ENCODE measurements at regions of chr1 and their contacts with region 1.

Region 1: DNA sequence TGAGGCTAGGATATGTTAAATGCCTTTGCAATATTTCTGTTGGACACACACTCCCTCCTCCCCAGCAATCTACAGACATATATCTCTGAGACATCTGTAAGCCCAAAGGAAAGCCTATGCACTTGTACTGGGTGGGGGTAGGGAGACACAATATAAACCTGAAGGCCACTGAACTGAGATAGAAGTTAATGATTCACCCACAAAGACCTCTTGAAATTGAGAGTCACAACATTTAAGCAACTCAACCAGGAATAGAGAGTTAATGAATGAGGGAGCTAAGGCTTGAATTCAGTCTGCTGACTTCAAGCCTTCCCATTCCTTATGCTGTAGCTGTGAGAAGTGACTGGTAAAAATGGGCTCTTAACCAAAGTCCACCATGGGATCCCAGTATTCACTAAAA is 5.0 kb downstream of the OR10J1 start:
- DNase-seq: no peak
- ATAC-seq: no peak
- H3K4me3 ChIP-seq: no peak overlapping the region
- H3K27ac ChIP-seq: no peak overlapping the region
- H3K4me1 ChIP-seq: no peaks in the 10 kb centered on the region
- H3K27me3 ChIP-seq: no peaks in the 10 kb centered on the region
- CTCF ChIP-seq: no peak
- EP300 ChIP-seq: no peak
- POLR2A ChIP-seq: no peak
- RAD21 ChIP-seq: no peak

Region 2: DNA sequence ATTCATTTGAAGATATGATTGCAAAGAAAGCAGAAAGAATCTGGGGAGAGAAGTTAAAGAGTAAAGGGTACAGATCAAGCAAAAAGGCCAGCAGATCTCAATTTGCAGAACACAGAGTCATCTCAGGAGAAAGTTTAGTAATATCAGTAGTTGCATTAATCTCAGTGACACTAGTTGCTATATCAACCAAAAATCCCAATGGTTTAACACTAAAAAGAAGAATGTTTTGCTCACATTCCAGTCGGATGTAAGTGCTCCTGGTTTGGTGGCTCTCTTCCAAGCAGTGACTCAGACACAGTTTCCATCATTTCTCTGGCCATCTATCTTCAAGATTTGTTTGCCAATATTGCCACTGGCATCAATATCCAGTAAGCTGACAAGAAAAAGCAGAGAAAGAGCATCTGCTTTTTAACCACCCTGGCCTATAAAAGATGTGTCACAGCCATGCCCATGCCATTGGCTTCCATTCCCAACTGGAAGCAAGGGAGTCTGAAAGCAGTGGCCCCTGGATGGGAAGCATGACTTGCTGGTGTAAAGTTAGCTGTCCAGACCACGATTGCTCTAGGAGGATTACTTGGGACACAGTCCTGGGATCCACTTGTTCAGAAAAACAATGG is 322.4 kb before region 1 on chr1:
- CTCF ChIA-PET with region 1: no interaction called
- POLR2A ChIA-PET with region 1: no interaction called
- RAD21 ChIA-PET with region 1: no interaction called
- SMC1A ChIA-PET with region 1: no interaction called
- in situ Hi-C with region 1: no loop called
- intact Hi-C with region 1: no loop called
- DNase-seq: peak; percentile 19
- ATAC-seq: peak; percentile 87
- H3K4me3 ChIP-seq: no peak overlapping the region
- H3K27ac ChIP-seq: no peak overlapping the region
- H3K4me1 ChIP-seq: peaks cover 9% of the 10 kb centered on the region
- H3K27me3 ChIP-seq: peaks cover 2 to 11% of the 10 kb centered on the region in 2 experiments; a peak in 3 of 4 replicates
- CTCF ChIP-seq: no peak
- EP300 ChIP-seq: peak; percentile 79 to 82; a peak in 3 of 4 replicates
- POLR2A ChIP-seq: no peak
- RAD21 ChIP-seq: no peak

Region 3: GRCh38 chr1:159465191-159465603 is 20.7 kb after region 1 on chr1:
- CTCF ChIA-PET with region 1: no interaction called
- POLR2A ChIA-PET with region 1: no interaction called
- RAD21 ChIA-PET with region 1: no interaction called
- SMC1A ChIA-PET with region 1: no interaction called
- in situ Hi-C with region 1: no loop called
- intact Hi-C with region 1: loop called (anchors 1 kb)
- DNase-seq: no peak
- ATAC-seq: no peak
- H3K4me3 ChIP-seq: no peak overlapping the region
- H3K27ac ChIP-seq: no peak overlapping the region
- H3K4me1 ChIP-seq: no peaks in the 10 kb centered on the region
- H3K27me3 ChIP-seq: no peaks in the 10 kb centered on the region
- CTCF ChIP-seq: no peak
- EP300 ChIP-seq: no peak
- POLR2A ChIP-seq: no peak
- RAD21 ChIP-seq: no peak